PC-3 (cell line): ENCODE measurements at regions of chr12 and their contacts with region 1.

Region 1: GRCh38 chr12:113980537-113981337 is 14.6 kb upstream of the RBM19 start:
- DNase-seq: peak; percentile 80
- ATAC-seq: peak; percentile 86
- H3K4me3 ChIP-seq: no peak overlapping the region
- H3K27ac ChIP-seq: no peak overlapping the region
- H3K4me1 ChIP-seq: no peaks in the 10 kb centered on the region
- H3K27me3 ChIP-seq: peaks cover 59% of the 10 kb centered on the region
- CTCF ChIP-seq: peak; percentile 99

Region 2: DNA sequence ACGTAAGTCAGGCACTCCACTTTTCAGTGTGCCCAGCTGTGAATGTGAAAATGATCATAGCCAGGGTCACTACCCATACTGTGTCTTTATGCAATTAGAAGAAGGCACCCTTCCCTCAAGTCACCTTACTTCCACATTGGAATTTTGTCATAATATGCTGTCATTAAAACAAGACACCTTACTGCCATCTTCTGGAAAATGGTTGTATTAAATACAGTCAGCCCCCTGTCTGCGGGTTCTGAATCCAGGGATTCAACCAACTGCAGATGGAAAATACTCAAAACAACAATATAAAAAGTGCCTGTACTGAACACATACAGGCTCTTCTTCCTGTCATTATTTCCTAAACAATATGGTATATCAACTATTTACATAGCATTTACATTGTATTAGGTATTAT is 495.4 kb after region 1 on chr12:
- CTCF ChIA-PET with region 1: interaction called, 17 read pairs
- POLR2A ChIA-PET with region 1: no interaction called
- intact Hi-C with region 1: loop called (anchors 1 kb)
- DNase-seq: peak; percentile 62
- ATAC-seq: peak; percentile 70
- H3K4me3 ChIP-seq: no peak overlapping the region
- H3K27ac ChIP-seq: no peak overlapping the region
- H3K4me1 ChIP-seq: no peaks in the 10 kb centered on the region
- H3K27me3 ChIP-seq: peaks cover 84% of the 10 kb centered on the region
- CTCF ChIP-seq: peak; percentile 74

Region 3: GRCh38 chr12:114508529-114509129 is 527.9 kb after region 1 on chr12:
- CTCF ChIA-PET with region 1: interaction called, 29 read pairs
- POLR2A ChIA-PET with region 1: no interaction called
- intact Hi-C with region 1: loop called (anchors 1 kb)
- DNase-seq: peak; percentile 75
- ATAC-seq: peak; percentile 83
- H3K4me3 ChIP-seq: no peak overlapping the region
- H3K27ac ChIP-seq: no peak overlapping the region
- H3K4me1 ChIP-seq: no peaks in the 10 kb centered on the region
- H3K27me3 ChIP-seq: peaks cover 71% of the 10 kb centered on the region
- CTCF ChIP-seq: peak; percentile 93

Region 4: GRCh38 chr12:114636723-114637483 is 656.2 kb after region 1 on chr12:
- CTCF ChIA-PET with region 1: interaction called, 11 read pairs
- POLR2A ChIA-PET with region 1: no interaction called
- intact Hi-C with region 1: loop called (anchors 1 kb)
- DNase-seq: peak; percentile 36
- ATAC-seq: peak; percentile 64
- H3K4me3 ChIP-seq: no peak overlapping the region
- H3K27ac ChIP-seq: no peak overlapping the region
- H3K4me1 ChIP-seq: no peaks in the 10 kb centered on the region
- H3K27me3 ChIP-seq: 0 out of 2 replicates have a peak, but pooled peaks cover 7% of the 10 kb centered on the region
- CTCF ChIP-seq: peak; percentile 69